ENCODE measurements at regions of chr17 and their contacts with region 1.

Region 1: DNA sequence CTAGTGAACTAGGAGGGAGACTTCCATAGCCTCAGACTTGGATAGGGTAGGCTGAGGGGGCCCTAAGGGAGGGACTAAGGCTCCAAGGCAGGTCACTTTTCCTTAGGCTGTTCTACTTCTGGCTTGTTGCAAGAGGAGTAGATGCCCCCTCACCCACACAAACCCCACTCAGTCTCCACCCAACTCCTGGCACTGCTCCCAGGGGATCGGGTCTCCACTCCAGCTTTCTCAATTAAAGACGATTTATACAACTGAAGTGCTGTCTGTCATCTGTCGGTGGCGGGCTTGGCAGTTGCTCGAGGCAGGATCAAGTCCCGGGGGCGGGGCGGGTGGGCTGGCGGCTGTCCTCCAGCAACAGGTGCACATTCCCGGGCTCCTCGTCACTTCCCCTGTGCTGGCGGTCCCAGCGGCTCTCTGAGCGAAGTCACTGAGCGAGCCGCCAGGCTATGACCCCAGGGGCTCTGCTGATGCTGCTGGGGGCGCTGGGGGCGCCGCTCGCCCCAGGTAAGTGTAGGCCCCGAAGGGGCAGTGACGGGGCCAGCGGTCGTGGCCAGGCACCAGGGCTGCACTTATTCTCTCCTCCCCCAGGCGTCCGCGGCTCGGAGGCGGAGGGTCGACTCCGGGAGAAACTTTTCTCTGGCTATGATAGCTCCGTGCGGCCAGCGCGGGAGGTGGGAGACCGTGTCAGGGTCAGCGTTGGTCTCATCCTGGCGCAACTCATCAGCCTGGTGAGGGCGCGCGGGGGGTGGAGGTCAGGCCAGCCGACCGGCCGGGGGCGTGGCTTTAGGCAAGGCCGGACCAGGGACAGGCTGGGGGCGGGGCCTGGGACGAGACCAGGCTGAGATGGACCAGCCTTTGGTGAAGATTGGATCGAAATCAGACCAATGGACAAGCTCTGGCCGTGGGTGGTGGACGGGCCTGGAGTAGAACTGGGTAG is at the start of gene CHRNB1:
- DNase-seq: no peak
- H3K4me3 ChIP-seq: peak within 1 kb of the TSS; percentile 11 to 64 (median 42)
- H3K27ac ChIP-seq: peak within 1 kb of the TSS; percentile 39 to 80 (median 57)
- H3K4me1 ChIP-seq: peaks cover 26 to 55% (median 35%) of the 10 kb centered on the region in 3 donors
- H3K27me3 ChIP-seq: peaks cover 0 to 61% (median 5%) of the 10 kb centered on the region in 4 donors
- CTCF ChIP-seq: peak in 2 of 6 experiments; percentile 4 to 6
- POLR2A ChIP-seq: no peak
- total RNA-seq, gene CHRNB1: 2.4 to 7.2 (median 4.6) TPM

Region 2: DNA sequence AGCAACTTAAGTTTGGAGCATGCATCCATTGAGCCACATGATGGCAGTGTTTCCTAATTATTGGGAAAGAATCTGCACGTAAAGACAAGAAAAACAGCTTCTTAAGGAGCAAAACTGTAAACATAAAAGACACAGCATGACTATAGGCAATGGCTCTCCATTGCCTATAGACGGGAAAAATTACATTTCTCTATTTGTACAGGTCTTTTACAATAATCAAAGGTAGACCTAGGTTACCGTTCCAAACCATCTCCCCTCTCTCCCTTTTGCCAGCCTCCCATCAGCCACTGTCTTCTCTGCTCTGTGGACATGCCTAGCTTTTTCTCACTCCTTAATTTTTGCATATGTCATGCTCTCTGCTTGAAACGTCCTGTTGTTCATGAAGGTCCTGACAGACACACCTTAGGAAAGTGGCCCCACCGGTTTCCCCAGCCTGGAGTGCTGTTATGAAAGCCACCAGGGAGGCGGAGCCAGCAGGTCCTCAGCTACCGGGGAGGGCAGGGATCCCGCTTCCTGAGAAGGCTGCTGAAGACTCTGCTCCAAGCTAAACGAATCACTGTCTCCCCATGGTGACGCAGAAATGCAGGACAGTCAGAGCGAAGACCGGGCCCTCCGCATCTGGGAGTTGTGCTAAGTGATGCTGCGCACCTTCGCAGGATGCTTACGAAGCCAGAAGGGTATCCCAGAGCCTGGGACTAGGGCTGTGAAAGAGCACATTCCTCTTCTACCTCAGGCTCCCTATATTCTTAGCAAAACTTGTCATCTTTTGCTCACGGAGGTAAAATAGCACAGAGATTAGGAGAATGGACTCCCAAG is 398.8 kb before region 1 on chr17:
- intact Hi-C with region 1: no loop called
- DNase-seq: no peak
- H3K4me3 ChIP-seq: peak overlapping the region; percentile 2 to 56 (median 40)
- H3K27ac ChIP-seq: peak overlapping the region; percentile 80 to 95 (median 86)
- H3K4me1 ChIP-seq: peaks cover 30 to 65% (median 34%) of the 10 kb centered on the region in 3 donors
- H3K27me3 ChIP-seq: peaks cover 0 to 40% (median 2%) of the 10 kb centered on the region in 4 donors
- CTCF ChIP-seq: peak; percentile 51 to 89 (median 78)
- POLR2A ChIP-seq: no peak

Region 3: GRCh38 chr17:7479404-7480221 is 34.7 kb after region 1 on chr17 and contains the start of gene ZBTB4:
- intact Hi-C with region 1: loop called (anchors 5 kb)
- DNase-seq: no peak
- H3K4me3 ChIP-seq: peak within 1 kb of the TSS; percentile 79 to 100 (median 94)
- H3K27ac ChIP-seq: peak within 1 kb of the TSS; percentile 98 to 100 (median 99)
- H3K4me1 ChIP-seq: peaks cover 45 to 81% (median 47%) of the 10 kb centered on the region in 3 donors
- H3K27me3 ChIP-seq: no peaks in the 10 kb centered on the region
- CTCF ChIP-seq: no peak
- POLR2A ChIP-seq: peak in 2 of 4 donors; percentile 51 to 80
- total RNA-seq, gene ZBTB4: 13.4 to 35.1 (median 28.5) TPM

Region 4: GRCh38 chr17:7644775-7645174 is 199.8 kb after region 1 on chr17:
- intact Hi-C with region 1: no loop called
- DNase-seq: no peak
- H3K4me3 ChIP-seq: no peak overlapping the region
- H3K27ac ChIP-seq: no peak overlapping the region
- H3K4me1 ChIP-seq: no peaks in the 10 kb centered on the region
- H3K27me3 ChIP-seq: peaks cover 0 to 20% (median 0%) of the 10 kb centered on the region in 4 donors
- CTCF ChIP-seq: no peak
- POLR2A ChIP-seq: no peak